ENCODE measurements at regions of chr15 and their contacts with region 1.

Region 1: GRCh38 chr15:70763120-70763878 is at the start of gene UACA:
- DNase-seq: peak; percentile 69 to 96 (median 90)
- H3K4me3 ChIP-seq: peak within 1 kb of the TSS; percentile 63 to 99 (median 83)
- H3K27ac ChIP-seq: peak within 1 kb of the TSS in 53 of 59 donors; percentile 34 to 93 (median 77)
- H3K27me3 ChIP-seq: peaks cover 0 to 34% (median 3%) of the 10 kb centered on the region in 45 donors
- CTCF ChIP-seq: peak in 29 of 56 donors; percentile 7 to 56 (median 27)
- total RNA-seq, gene UACA: 5.4 to 65.1 (median 20.5) TPM

Region 2: DNA sequence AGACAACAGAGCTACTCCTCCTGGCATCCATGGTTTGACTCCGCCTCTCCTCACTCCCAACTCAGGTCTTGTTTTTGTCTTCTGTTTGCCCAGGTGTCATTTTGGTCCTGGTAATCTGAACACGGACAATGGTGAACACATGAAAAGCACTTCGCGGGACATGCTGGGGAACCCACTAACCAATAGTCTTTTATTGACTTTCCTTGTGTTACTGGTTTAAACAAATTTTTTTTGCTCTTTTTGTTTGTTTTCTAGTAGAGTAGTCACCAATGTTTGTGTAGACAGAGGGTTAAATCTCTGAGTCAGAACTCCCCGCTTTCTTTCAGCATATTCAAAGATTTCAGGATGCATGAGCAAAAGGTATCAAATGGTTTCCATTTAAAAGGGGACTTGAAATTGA is 52.3 kb after region 1 on chr15:
- intact Hi-C with region 1: loop called in 1 of 2 experiments (anchors 5 kb)
- DNase-seq: no peak
- H3K4me3 ChIP-seq: no peak overlapping the region
- H3K27ac ChIP-seq: no peak overlapping the region
- H3K27me3 ChIP-seq: no peaks in the 10 kb centered on the region
- CTCF ChIP-seq: no peak

Region 3: GRCh38 chr15:70892002-70892914 is 129.0 kb after region 1 on chr15 and contains the starts of genes LRRC49 and THAP10:
- intact Hi-C with region 1: loop called in 1 of 2 experiments (anchors 5 kb)
- DNase-seq: peak; percentile 75 to 95 (median 90)
- H3K4me3 ChIP-seq: peak within 1 kb of the TSS; percentile 58 to 98 (median 86)
- H3K27ac ChIP-seq: peak within 1 kb of the TSS; percentile 51 to 95 (median 89)
- H3K27me3 ChIP-seq: no peaks in the 10 kb centered on the region
- CTCF ChIP-seq: peak in 6 of 56 donors; percentile 7 to 21 (median 8)
- total RNA-seq, gene LRRC49: 28.2 to 72.1 (median 48.6) TPM
- total RNA-seq, gene THAP10: 3.3 to 18.7 (median 10.3) TPM

Measured in dorsolateral prefrontal cortex (tissue), 120 donors.